ENCODE measurements at regions of chrX and their contacts with region 1.

Region 1: DNA sequence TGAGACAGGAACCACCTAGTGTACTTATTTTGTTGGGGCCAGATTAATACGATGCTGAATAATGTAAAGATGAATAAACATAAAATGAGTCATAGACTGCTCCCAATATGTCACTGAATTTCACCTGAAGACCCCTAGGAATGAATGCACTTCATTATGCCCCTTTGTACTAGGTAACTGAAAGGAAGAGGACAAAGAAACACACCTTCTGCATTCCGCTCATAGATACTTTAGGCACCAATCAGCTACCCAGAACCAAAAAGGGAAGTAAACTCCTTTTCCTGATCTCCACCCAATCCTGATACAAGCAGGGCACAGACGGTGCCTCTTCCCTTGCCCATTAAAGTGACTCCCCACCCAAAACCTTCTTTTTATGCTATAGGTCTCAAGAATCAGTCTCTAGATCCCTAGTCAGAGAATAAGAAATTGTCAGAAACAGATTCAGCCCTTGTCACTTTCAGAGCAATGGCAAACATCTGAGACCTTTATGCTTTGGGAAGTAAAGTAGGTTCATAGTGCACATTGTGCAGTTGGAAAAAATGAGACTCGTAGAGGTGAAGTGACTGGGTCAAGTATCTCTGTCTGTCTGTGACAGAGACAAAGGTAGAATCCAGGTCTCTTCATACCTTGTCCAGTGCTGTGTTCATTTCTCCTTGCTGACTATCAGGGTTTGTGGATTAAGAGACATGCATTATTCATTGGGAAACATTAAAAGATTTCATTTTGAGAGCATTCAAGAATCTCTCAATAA is 2.3 kb downstream of the GPR174 start:
- DNase-seq: peak; percentile 45
- ATAC-seq: peak; percentile 52
- H3K4me3 ChIP-seq: peak overlapping the region; percentile 39
- H3K27ac ChIP-seq: peak overlapping the region; percentile 73
- H3K4me1 ChIP-seq: peaks cover 8% of the 10 kb centered on the region
- H3K27me3 ChIP-seq: no peaks in the 10 kb centered on the region
- CTCF ChIP-seq: no peak
- EP300 ChIP-seq: no peak
- POLR2A ChIP-seq: no peak
- RAD21 ChIP-seq: no peak

Region 2: DNA sequence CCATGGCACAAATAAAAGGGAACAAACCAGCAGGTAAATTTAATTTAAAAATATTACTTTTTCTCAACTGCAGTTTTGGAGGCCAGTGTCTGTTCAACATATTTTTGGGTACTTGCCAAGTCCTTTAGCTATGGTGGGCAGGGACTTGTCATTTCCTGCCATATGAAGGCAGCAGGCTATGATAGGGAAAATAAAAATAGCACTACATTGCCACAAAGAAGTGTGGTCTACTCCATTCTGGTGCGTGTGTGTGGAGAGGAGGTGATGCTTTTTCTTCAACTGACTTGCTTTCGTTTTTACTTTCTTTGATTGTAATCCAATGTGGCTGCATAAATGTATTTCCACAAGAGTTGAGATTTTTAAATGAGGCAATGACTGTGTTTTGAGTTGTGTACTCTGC is 14.8 kb after region 1 on chrX:
- CTCF ChIA-PET with region 1: interaction called, 6 read pairs
- POLR2A ChIA-PET with region 1: interaction called, 13 read pairs
- RAD21 ChIA-PET with region 1: interaction called, 21 read pairs
- SMC1A ChIA-PET with region 1: interaction called, 135 read pairs
- in situ Hi-C with region 1: no loop called
- intact Hi-C with region 1: no loop called
- DNase-seq: peak; percentile 72
- ATAC-seq: peak; percentile 85
- H3K4me3 ChIP-seq: no peak overlapping the region
- H3K27ac ChIP-seq: peak overlapping the region; percentile 1; the same call in 1 of the 2 replicates
- H3K4me1 ChIP-seq: peaks cover 3% of the 10 kb centered on the region
- H3K27me3 ChIP-seq: no peaks in the 10 kb centered on the region
- CTCF ChIP-seq: no peak
- EP300 ChIP-seq: peak in 1 of 2 experiments; percentile 27; a peak in 2 of 4 replicates
- POLR2A ChIP-seq: no peak
- RAD21 ChIP-seq: no peak

Region 3: GRCh38 chrX:79167462-79167861 is 20.6 kb after region 1 on chrX:
- CTCF ChIA-PET with region 1: interaction called, 5 read pairs
- POLR2A ChIA-PET with region 1: interaction called, 13 read pairs
- RAD21 ChIA-PET with region 1: interaction called, 21 read pairs
- SMC1A ChIA-PET with region 1: interaction called, 135 read pairs
- in situ Hi-C with region 1: no loop called
- intact Hi-C with region 1: no loop called
- DNase-seq: no peak
- ATAC-seq: peak; percentile 24; the same call in 2 of the 3 replicates
- H3K4me3 ChIP-seq: no peak overlapping the region
- H3K27ac ChIP-seq: no peak overlapping the region
- H3K4me1 ChIP-seq: peaks cover 7% of the 10 kb centered on the region
- H3K27me3 ChIP-seq: no peaks in the 10 kb centered on the region
- CTCF ChIP-seq: no peak
- EP300 ChIP-seq: no peak
- POLR2A ChIP-seq: no peak
- RAD21 ChIP-seq: no peak